ENCODE measurements at regions of chr12 and their contacts with region 1.

Region 1: DNA sequence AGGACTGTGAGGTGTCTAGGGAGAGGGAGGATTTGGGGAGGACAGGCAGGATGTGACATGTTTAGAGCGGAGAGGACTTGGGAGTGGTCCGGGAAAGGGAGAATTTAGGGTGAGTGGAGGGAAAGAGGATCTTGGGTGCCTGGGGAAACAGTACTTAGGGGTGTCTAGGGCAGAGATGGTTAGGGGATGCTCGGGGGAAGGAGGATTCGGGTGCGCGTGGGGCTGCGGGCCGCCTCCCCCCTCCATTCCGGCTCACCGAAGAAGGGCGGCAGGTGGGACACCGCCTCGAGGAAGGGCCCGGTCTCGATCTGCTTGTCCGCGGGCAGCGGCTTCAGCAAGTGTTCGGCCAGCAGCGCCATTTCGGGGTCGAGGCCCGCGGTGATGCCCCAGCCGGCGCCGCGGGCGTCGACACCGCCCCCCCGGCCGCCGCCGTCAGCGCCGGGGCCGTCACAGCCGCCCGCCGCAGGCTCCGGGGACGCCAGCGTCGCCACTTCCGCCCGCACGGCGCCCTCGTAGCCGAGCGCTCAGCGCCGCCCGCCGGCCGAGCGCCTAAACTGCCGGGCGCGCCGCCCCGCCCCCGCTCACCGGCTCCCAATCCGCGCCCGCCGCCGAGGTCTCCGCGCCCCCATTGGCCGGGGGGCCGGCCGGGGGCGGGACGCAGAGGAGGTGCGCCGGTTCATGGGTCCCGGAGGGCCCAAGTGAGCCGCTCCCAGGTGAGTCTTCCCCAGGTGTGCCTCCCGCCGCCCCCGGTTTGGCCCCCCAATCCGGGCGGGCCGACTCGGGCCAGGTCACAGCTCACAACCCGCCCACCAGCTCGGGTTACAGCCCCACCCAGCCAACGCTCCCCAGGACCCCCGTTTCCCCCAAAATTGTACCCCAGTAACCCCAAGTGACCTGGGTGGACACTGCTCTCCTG is at the start of gene GLTP:
- DNase-seq: peak; percentile 83 to 95 (median 93)
- H3K4me3 ChIP-seq: peak within 1 kb of the TSS; percentile 82 to 97
- H3K4me3 Mint-ChIP-seq: peak within 1 kb of the TSS; percentile 94 to 98 (median 96)
- H3K27ac ChIP-seq: peak within 1 kb of the TSS; percentile 96
- H3K27ac Mint-ChIP-seq: peak within 1 kb of the TSS; percentile 92 to 99 (median 98)
- H3K4me1 ChIP-seq: peaks cover 42% of the 10 kb centered on the region
- H3K4me1 Mint-ChIP-seq: peaks cover 30 to 56% (median 44%) of the 10 kb centered on the region in 4 donors
- H3K27me3 ChIP-seq: no peaks in the 10 kb centered on the region
- H3K27me3 Mint-ChIP-seq: peaks cover 0 to 2% of the 10 kb centered on the region in 2 donors
- total RNA-seq, gene GLTP: 24.0 TPM

Region 2: GRCh38 chr12:109597795-109598427 is 282.4 kb before region 1 on chr12:
- CTCF ChIA-PET with region 1: no interaction called
- POLR2A ChIA-PET with region 1: no interaction called
- intact Hi-C with region 1: loop called (anchors 1 kb)
- DNase-seq: peak in 4 of 5 donors; percentile 44 to 47 (median 46)
- H3K4me3 ChIP-seq: no peak overlapping the region
- H3K4me3 Mint-ChIP-seq: peak overlapping the region in 3 of 8 donors; percentile 35 to 54 (median 40)
- H3K27ac ChIP-seq: no peak overlapping the region
- H3K27ac Mint-ChIP-seq: peak overlapping the region in 2 of 7 donors; percentile 50 to 86
- H3K4me1 ChIP-seq: peaks cover 24% of the 10 kb centered on the region
- H3K4me1 Mint-ChIP-seq: peaks cover 17 to 42% (median 26%) of the 10 kb centered on the region in 4 donors
- H3K27me3 ChIP-seq: no peaks in the 10 kb centered on the region
- H3K27me3 Mint-ChIP-seq: no peaks in the 10 kb centered on the region

Region 3: DNA sequence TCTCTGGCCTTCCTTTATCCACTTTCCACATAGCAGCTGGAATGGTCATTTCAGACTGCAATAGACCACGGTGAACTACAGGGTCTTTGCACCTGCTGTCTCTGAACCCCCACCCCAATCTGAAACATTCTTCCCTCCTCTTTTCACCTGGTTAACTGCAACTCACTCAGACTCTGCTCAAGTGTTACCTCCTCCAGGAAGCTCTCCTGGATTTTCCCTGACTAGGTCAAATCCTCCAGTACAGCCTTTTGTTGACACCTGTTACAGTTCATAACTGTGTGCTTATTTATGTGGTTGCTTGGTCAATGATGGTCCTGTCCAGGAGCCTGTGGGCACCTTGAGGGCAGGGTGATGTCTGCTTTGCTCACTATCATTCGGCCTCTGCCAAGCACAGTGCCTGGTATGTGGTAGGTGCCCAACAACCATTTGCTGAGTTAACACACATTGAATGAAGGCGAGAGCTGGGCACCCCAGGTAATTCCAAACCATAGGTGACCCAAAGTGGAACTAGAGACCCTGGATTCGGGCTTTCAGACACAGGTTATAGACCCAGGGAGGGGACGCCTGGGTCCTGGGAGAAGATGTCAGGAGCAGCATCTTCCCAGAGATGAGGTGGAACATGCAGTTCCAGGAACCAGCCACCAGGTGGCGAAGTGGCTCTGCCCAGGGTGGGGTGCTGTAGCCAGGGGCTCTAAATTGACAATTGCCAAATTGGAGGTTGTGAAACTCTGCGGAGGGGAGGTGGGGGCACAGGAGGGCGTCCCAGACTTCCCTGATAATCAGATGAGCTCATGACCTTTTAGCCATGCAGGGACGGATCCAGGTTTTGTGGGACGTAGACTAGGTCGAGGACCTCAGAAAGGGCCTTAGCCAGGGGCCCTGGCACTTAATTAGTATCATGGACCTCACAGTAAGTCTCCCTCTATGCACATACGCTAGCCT is 75.2 kb before region 1 on chr12:
- CTCF ChIA-PET with region 1: interaction called, 29 read pairs
- POLR2A ChIA-PET with region 1: interaction called, 4 read pairs
- intact Hi-C with region 1: loop called (anchors 1 kb)
- DNase-seq: peak; percentile 58 to 69 (median 61)
- H3K4me3 ChIP-seq: no peak overlapping the region
- H3K4me3 Mint-ChIP-seq: no peak overlapping the region
- H3K27ac ChIP-seq: no peak overlapping the region
- H3K27ac Mint-ChIP-seq: peak overlapping the region in 4 of 7 donors; percentile 17 to 65 (median 41)
- H3K4me1 ChIP-seq: no peaks in the 10 kb centered on the region
- H3K4me1 Mint-ChIP-seq: peaks cover 0 to 1% (median 0%) of the 10 kb centered on the region in 4 donors
- H3K27me3 ChIP-seq: no peaks in the 10 kb centered on the region
- H3K27me3 Mint-ChIP-seq: peaks cover 0 to 1% of the 10 kb centered on the region in 2 donors

Region 4: DNA sequence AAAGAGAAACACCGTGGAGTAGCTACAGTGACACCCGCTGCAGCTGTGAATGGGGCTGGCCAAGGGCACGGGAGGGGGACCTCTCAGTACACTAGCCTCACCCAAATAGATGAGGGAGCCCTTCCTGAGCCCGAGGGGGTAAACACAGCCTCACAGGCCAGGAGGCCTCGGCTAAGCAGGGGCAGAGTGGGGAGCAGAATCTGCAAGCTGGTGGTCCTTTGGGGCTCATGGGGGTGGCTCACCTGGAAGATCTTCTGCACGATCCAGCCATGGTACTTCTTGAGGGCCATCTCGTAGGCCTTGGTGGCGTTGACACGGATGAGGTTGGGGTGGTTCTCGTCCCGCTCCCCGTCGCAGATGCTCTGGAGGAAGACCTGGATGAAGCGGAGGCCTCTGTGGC is 24.9 kb before region 1 on chr12:
- CTCF ChIA-PET with region 1: interaction called, 14 read pairs
- POLR2A ChIA-PET with region 1: no interaction called
- intact Hi-C with region 1: loop called (anchors 1 kb)
- DNase-seq: no peak
- H3K4me3 ChIP-seq: no peak overlapping the region
- H3K4me3 Mint-ChIP-seq: no peak overlapping the region
- H3K27ac ChIP-seq: no peak overlapping the region
- H3K27ac Mint-ChIP-seq: no peak overlapping the region
- H3K4me1 ChIP-seq: no peaks in the 10 kb centered on the region
- H3K4me1 Mint-ChIP-seq: peaks cover 0 to 3% (median 2%) of the 10 kb centered on the region in 4 donors
- H3K27me3 ChIP-seq: no peaks in the 10 kb centered on the region
- H3K27me3 Mint-ChIP-seq: no peaks in the 10 kb centered on the region

Region 5: DNA sequence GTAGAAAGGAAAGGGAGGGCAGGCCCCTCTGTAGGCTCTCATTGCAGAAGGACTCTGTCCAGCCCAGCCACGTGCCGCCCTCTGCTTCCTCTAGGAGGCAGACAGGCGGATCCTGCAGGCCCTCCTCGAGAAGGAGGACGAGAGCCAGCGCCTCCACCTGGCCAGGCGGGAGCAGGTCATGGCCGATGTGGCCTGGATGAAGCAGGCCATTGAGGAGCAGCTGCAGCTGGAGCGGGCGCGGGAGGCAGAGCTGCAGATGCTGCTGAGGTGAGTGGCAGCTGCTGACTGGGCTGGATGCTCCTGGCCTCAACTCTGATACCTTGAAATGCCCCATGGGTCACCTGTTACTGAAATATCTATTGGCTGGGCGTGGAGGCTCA is 30.7 kb after region 1 on chr12:
- CTCF ChIA-PET with region 1: no interaction called
- POLR2A ChIA-PET with region 1: no interaction called
- intact Hi-C with region 1: no loop called
- DNase-seq: peak in 1 of 5 donors; percentile 8
- H3K4me3 ChIP-seq: no peak overlapping the region
- H3K4me3 Mint-ChIP-seq: no peak overlapping the region
- H3K27ac ChIP-seq: no peak overlapping the region
- H3K27ac Mint-ChIP-seq: peak overlapping the region in 4 of 7 donors; percentile 15 to 54 (median 31)
- H3K4me1 ChIP-seq: no peaks in the 10 kb centered on the region
- H3K4me1 Mint-ChIP-seq: peaks cover 0 to 4% (median 2%) of the 10 kb centered on the region in 4 donors
- H3K27me3 ChIP-seq: no peaks in the 10 kb centered on the region
- H3K27me3 Mint-ChIP-seq: no peaks in the 10 kb centered on the region

Region 6: GRCh38 chr12:110280779-110281548 is 400.7 kb after region 1 on chr12 and contains the start of gene ATP2A2:
- CTCF ChIA-PET with region 1: no interaction called
- POLR2A ChIA-PET with region 1: no interaction called
- intact Hi-C with region 1: loop called (anchors 2 kb)
- DNase-seq: peak; percentile 89 to 93 (median 92)
- H3K4me3 ChIP-seq: peak within 1 kb of the TSS; percentile 87 to 88
- H3K4me3 Mint-ChIP-seq: peak within 1 kb of the TSS; percentile 91 to 98 (median 94)
- H3K27ac ChIP-seq: peak within 1 kb of the TSS; percentile 85
- H3K27ac Mint-ChIP-seq: peak within 1 kb of the TSS; percentile 90 to 98 (median 94)
- H3K4me1 ChIP-seq: peaks cover 47% of the 10 kb centered on the region
- H3K4me1 Mint-ChIP-seq: peaks cover 36 to 53% (median 43%) of the 10 kb centered on the region in 4 donors
- H3K27me3 ChIP-seq: no peaks in the 10 kb centered on the region
- H3K27me3 Mint-ChIP-seq: no peaks in the 10 kb centered on the region
- total RNA-seq, gene ATP2A2: 90.4 to 91.0 TPM